Endothelial cell of umbilical vein (primary cell): ENCODE measurements at regions of chr1 and their contacts with region 1.

Region 1: GRCh38 chr1:75203415-75204277 is 69.5 kb downstream of the LHX8 start:
- DNase-seq: peak; percentile 61
- H3K4me3 ChIP-seq: no peak overlapping the region
- H3K27ac ChIP-seq: no peak overlapping the region
- H3K4me1 ChIP-seq: peaks cover 4% of the 10 kb centered on the region
- H3K27me3 ChIP-seq: peaks cover 0 to 7% of the 10 kb centered on the region in 2 experiments
- CTCF ChIP-seq: peak; percentile 48 to 59
- POLR2A ChIP-seq: no peak

Region 2: GRCh38 chr1:75053207-75053606 is 150.4 kb before region 1 on chr1:
- CTCF ChIA-PET with region 1: interaction called, 3 read pairs
- POLR2A ChIA-PET with region 1: no interaction called
- dilution Hi-C with region 1: no loop called
- intact Hi-C with region 1: loop called (anchors 1 kb)
- DNase-seq: peak; percentile 14
- H3K4me3 ChIP-seq: no peak overlapping the region
- H3K27ac ChIP-seq: no peak overlapping the region
- H3K4me1 ChIP-seq: no peaks in the 10 kb centered on the region
- H3K27me3 ChIP-seq: no peaks in the 10 kb centered on the region
- CTCF ChIP-seq: no peak
- POLR2A ChIP-seq: no peak

Region 3: DNA sequence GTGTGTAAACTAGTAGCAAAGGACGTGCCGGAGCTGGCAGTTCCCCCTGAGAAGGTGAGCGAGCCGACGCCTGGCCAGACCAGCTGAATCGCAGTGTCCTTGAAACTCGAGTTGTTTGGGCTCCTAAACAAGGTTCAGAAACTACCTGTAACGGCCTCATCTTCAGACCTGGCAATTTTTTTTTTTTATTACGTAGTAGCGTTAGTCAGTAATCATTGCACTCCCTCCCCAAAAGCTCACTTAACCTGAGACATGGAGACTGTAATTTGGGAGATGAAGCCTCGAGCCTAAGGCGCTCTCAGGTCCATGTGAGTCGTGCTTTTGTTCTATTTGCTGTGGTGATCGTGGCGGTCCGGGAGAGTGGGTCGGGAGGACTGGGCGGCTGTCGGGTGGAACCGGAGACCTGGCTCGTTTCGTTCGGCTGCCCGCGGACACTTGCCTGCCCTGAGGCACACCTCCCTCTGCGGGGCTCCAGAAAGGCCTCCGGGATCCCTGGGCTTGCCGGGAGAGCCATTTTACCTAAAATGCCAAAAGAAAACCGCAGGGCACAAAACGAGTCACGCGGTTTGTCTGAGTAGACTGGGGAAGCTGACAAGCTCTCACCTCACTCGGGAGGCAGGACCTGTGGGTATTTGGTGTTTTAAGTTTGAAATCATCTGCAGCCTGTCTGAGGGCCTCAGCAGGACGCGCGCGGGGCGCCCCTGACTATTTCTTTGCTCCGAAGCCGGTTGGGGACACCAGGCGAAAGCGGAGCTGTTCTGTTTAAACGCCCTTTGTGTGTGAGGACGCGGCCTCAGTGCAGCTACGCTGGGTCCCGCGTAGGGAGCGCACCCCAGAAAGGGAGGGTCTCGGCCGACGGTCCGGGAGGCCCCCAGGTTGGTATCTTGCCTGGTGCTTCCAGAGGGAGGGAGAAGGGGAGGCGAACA is 68.7 kb before region 1 on chr1:
- CTCF ChIA-PET with region 1: interaction called, 6 read pairs
- POLR2A ChIA-PET with region 1: no interaction called
- dilution Hi-C with region 1: no loop called
- intact Hi-C with region 1: loop called (anchors 5 kb)
- DNase-seq: peak; percentile 28
- H3K4me3 ChIP-seq: no peak overlapping the region
- H3K27ac ChIP-seq: no peak overlapping the region
- H3K4me1 ChIP-seq: no peaks in the 10 kb centered on the region
- H3K27me3 ChIP-seq: peaks cover 89 to 98% of the 10 kb centered on the region in 2 experiments
- CTCF ChIP-seq: no peak
- POLR2A ChIP-seq: no peak